ENCODE measurements at regions of chr1 and their contacts with region 1.

Region 1: GRCh38 chr1:169348383-169349036 is 19.1 kb downstream of the NME7 start:
- DNase-seq: no peak
- H3K4me3 Mint-ChIP-seq: no peak overlapping the region
- H3K27ac Mint-ChIP-seq: no peak overlapping the region
- H3K4me1 Mint-ChIP-seq: peaks cover 6% of the 10 kb centered on the region
- H3K27me3 Mint-ChIP-seq: no peaks in the 10 kb centered on the region

Region 2: GRCh38 chr1:168603501-168604110 is 744.9 kb before region 1 on chr1:
- CTCF ChIA-PET with region 1: interaction called, 132 read pairs
- POLR2A ChIA-PET with region 1: interaction called, 4 read pairs
- intact Hi-C with region 1: loop called (anchors 1 kb)
- DNase-seq: peak; percentile 77
- H3K4me3 Mint-ChIP-seq: no peak overlapping the region
- H3K27ac Mint-ChIP-seq: no peak overlapping the region
- H3K4me1 Mint-ChIP-seq: no peaks in the 10 kb centered on the region
- H3K27me3 Mint-ChIP-seq: peaks cover 7% of the 10 kb centered on the region

Region 3: DNA sequence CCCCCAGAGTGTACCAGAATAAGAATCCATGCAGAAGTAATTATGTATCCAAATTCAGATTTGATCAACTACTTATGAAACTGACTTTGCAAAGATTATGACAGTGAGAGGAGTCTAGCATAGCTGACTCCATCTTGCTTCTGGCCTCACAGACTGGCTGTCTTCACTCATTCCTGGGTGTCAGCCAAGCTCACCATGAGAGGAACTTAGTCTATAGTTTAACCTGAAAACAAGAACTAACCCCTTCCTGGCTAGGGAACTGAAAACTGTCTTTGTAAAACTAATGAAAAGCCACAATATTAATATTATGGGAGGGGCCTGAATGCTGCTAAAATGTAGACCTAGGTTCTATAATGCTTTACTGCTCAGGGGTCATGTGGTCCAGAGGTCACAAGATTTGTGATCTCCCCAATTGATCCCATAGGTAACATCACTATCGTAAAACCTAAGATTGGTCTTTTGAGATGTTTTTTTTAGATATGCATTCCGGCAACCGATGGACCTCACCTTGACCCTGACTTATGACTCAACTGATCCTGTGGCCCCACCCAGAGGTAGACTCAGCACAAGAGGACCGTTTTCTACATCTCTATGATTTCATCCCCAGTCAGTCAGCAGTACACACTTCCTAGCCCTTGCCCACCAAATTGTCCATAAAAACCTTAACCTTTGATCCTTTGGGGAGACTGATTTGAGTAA is 186.9 kb before region 1 on chr1:
- CTCF ChIA-PET with region 1: interaction called, 10 read pairs
- POLR2A ChIA-PET with region 1: no interaction called
- intact Hi-C with region 1: no loop called
- DNase-seq: no peak
- H3K4me3 Mint-ChIP-seq: no peak overlapping the region
- H3K27ac Mint-ChIP-seq: no peak overlapping the region
- H3K4me1 Mint-ChIP-seq: peaks cover 8% of the 10 kb centered on the region
- H3K27me3 Mint-ChIP-seq: no peaks in the 10 kb centered on the region

Region 4: GRCh38 chr1:169318536-169319244 is 29.8 kb before region 1 on chr1:
- CTCF ChIA-PET with region 1: no interaction called
- POLR2A ChIA-PET with region 1: no interaction called
- intact Hi-C with region 1: no loop called
- DNase-seq: no peak
- H3K4me3 Mint-ChIP-seq: no peak overlapping the region
- H3K27ac Mint-ChIP-seq: no peak overlapping the region
- H3K4me1 Mint-ChIP-seq: peaks cover 2% of the 10 kb centered on the region
- H3K27me3 Mint-ChIP-seq: no peaks in the 10 kb centered on the region

Region 5: GRCh38 chr1:169360415-169360814 is 11.9 kb after region 1 on chr1:
- CTCF ChIA-PET with region 1: interaction called, 11 read pairs
- POLR2A ChIA-PET with region 1: no interaction called
- intact Hi-C with region 1: no loop called
- DNase-seq: no peak
- H3K4me3 Mint-ChIP-seq: no peak overlapping the region
- H3K27ac Mint-ChIP-seq: no peak overlapping the region
- H3K4me1 Mint-ChIP-seq: peaks cover 26% of the 10 kb centered on the region
- H3K27me3 Mint-ChIP-seq: no peaks in the 10 kb centered on the region